GM13977 (cell line): ENCODE measurements at regions of chr17 and their contacts with region 1.

Region 1: DNA sequence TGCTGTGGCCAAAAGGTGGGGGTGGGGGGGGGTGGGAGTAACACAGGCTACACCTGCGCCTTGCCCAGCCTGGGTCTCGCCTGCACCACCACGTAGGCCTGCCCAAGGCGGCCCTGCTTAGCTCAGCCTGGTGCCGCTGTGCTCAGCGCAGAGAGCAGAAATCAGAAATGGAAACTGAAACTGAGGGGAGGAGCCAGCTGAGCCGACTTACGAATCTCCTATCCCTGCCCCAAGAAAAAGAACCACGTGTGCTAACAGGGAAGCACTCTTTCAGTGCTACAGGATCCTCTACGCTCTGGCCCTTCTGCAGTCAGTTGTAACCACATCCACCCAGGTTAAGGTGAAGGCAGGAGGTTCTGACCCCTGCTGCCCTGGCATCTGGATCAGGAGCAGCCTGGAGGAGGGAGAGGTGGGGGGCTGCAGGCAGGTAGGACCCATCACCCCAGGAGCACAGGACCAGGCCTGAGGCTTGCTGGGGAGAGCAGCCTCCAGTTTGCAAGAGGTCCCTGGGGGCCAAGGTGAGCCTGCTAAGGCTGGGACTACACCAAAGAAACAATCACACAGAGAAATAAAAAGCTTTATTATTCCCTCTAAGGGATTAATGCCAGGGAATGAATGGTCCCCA is at the start of gene DHX58:
- DNase-seq: peak; percentile 95
- CTCF ChIP-seq: no peak

Region 2: DNA sequence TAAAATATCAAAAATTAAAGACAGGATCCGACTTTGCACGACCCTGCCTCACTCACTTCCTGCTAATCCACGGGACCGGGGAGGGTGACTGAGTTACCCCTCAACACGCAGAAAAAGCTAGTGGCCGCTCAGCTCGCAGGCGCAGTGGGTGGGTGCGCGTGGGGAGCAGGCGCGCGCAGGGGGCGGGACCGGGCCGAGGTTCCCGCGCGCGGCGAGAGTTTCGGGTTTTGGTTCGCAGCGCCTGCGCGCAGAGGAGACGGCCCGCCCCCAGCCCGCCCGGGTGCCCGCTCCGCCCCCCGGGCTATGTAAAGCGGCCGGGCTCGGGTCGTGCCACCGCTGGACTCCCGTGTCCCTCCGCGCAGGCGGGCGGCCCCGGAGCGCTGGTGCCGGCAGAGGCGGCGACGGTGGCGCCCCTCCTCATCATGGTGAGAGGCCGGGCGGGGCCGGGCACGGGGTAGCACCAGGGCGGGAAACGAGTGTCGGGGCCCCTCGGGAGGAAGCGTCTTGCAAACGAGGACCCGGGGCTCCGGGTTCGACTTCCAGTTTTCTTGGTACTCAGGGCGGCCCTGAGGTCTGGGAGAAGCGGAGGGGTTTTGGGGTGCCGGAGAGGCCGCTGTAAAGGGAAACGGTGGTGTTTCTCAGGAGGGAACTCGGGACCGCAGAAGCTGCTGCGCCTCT is 146.1 kb before region 1 on chr17 and contains the start of gene CNP:
- in situ Hi-C with region 1: loop called (anchors 10 kb)
- DNase-seq: peak; percentile 98
- CTCF ChIP-seq: no peak

Region 3: GRCh38 chr17:42019509-42020404 is 92.9 kb before region 1 on chr17 and contains the start of gene NKIRAS2:
- in situ Hi-C with region 1: loop called (anchors 10 kb)
- DNase-seq: peak; percentile 95
- CTCF ChIP-seq: peak; percentile 94

Region 4: DNA sequence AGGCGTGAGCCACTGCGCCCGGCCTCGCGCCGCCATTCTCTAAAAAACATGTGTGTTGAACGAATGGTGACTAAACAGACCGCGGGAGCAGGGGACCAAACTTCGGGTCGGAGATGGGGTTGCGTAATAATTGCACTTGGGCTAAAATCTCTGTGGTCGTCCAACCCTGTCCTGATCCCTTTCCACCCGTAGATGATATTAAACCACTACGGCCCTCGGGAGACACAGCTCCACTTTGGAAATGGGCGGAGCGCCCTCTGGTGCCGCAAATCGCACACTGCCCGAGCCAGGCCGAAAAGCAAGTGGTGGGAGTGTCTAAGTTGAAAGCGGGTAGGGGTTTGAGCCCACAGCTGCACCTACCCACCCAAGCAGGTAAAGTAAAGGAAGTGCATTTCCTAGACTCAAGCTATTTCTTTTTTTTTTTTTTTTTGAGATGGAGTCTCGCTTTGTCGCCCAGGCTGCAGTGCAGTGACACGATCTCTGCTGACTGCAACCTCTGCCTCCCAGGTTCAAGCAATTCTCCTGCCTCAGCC is 293.4 kb after region 1 on chr17:
- in situ Hi-C with region 1: no loop called
- DNase-seq: peak; percentile 87
- CTCF ChIP-seq: peak; percentile 94